Activated CD4-positive, alpha-beta T cell treated with anti-CD3 and anti-CD28 coated beads for 36 hours (primary cell): ENCODE measurements at regions of chr1 and their contacts with region 1.

Region 1: GRCh38 chr1:154607609-154608396 is at the start of gene ADAR:
- DNase-seq: peak; percentile 95
- ATAC-seq: peak; percentile 69
- H3K4me3 Mint-ChIP-seq: peak within 1 kb of the TSS; percentile 95
- H3K27ac Mint-ChIP-seq: peak within 1 kb of the TSS; percentile 99
- H3K4me1 Mint-ChIP-seq: peaks cover 75% of the 10 kb centered on the region
- H3K27me3 Mint-ChIP-seq: no peaks in the 10 kb centered on the region
- total RNA-seq, gene ADAR: 310 to 332 TPM

Region 2: DNA sequence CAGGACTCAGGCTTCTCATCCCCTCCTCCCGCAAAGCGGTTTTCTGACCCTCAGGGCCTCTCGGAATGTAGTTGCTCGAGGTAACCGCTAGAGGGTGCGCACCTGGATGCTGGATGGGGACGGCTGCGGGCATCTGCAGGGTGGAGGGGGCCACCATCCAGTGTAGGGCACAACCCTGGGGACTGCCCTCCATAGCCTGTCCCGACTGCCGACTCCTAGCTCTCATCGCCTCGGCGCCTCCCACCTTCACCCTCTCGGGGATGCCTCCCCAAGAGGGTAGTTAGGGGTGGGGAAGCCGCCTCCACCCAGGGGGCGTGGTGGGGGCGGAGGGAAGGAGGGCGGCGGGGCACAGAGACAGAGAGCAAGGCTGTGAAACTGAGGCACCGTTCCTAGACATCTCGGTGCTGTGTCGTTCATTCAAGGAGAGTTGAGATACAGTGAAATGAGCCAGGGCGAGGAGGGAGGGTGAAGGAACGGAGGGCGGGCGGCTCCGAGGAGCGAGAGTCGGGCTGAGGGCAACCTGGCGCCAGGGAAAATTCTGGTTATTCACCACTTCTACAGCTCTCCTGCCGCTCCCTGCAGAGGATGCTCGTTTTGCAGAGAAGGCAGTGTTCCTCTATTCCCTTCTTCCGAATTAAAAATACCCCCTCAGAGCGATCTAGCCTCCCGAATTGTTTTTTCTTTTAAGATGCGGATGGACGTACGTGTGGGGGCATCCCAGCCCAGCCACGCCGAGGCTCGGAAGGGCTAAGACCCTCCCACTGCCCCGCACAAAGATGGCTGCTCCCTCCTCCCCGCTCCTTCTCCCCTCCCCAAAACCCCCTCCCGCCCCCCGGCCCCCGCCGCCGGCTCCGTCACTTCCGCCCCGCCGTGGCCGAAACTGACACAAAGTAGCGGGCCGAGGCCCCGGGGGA is 282.9 kb before region 1 on chr1 and contains the start of gene ATP8B2:
- CTCF ChIA-PET with region 1: no interaction called
- POLR2A ChIA-PET with region 1: no interaction called
- intact Hi-C with region 1: loop called in 1 of 2 experiments (anchors 1 kb)
- DNase-seq: peak; percentile 92
- ATAC-seq: peak; percentile 70
- H3K4me3 Mint-ChIP-seq: peak within 1 kb of the TSS; percentile 99
- H3K27ac Mint-ChIP-seq: peak within 1 kb of the TSS; percentile 94
- H3K4me1 Mint-ChIP-seq: peaks cover 39% of the 10 kb centered on the region
- H3K27me3 Mint-ChIP-seq: no peaks in the 10 kb centered on the region
- total RNA-seq, gene ATP8B2: 48.2 TPM

Region 3: GRCh38 chr1:154574716-154575115 is 33.1 kb before region 1 on chr1:
- CTCF ChIA-PET with region 1: no interaction called
- POLR2A ChIA-PET with region 1: no interaction called
- intact Hi-C with region 1: no loop called
- DNase-seq: peak; percentile 47
- ATAC-seq: peak; percentile 42
- H3K4me3 Mint-ChIP-seq: no peak overlapping the region
- H3K27ac Mint-ChIP-seq: no peak overlapping the region
- H3K4me1 Mint-ChIP-seq: no peaks in the 10 kb centered on the region
- H3K27me3 Mint-ChIP-seq: no peaks in the 10 kb centered on the region

Region 4: GRCh38 chr1:154627257-154628120 is 19.7 kb after region 1 on chr1:
- CTCF ChIA-PET with region 1: interaction called, 18 read pairs
- POLR2A ChIA-PET with region 1: interaction called, 6 read pairs
- intact Hi-C with region 1: loop called (anchors 1 kb)
- DNase-seq: peak; percentile 96
- ATAC-seq: peak; percentile 74
- H3K4me3 Mint-ChIP-seq: peak overlapping the region; percentile 99
- H3K27ac Mint-ChIP-seq: peak overlapping the region; percentile 100
- H3K4me1 Mint-ChIP-seq: peaks cover 47% of the 10 kb centered on the region
- H3K27me3 Mint-ChIP-seq: peaks cover 1% of the 10 kb centered on the region

Region 5: DNA sequence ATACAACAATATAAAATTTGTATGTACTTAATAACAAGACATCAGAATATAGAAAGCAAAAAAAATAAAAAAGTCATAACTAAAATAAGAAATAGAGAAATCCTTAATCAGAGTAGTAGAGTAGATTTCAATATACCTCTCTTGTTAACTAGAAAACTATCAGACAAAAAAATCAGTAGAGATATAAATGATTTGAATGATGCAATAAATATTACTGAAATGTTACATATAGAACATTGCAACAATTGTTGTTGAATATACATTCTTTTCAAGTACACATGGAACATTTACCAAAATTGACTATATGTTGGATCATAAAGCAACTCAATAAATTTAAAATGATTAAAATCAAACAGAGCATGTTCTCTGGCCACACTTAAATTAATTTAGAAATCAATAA is 32.1 kb after region 1 on chr1:
- CTCF ChIA-PET with region 1: no interaction called
- POLR2A ChIA-PET with region 1: no interaction called
- intact Hi-C with region 1: no loop called
- DNase-seq: no peak
- ATAC-seq: no peak
- H3K4me3 Mint-ChIP-seq: no peak overlapping the region
- H3K27ac Mint-ChIP-seq: no peak overlapping the region
- H3K4me1 Mint-ChIP-seq: no peaks in the 10 kb centered on the region
- H3K27me3 Mint-ChIP-seq: peaks cover 16% of the 10 kb centered on the region

Region 6: DNA sequence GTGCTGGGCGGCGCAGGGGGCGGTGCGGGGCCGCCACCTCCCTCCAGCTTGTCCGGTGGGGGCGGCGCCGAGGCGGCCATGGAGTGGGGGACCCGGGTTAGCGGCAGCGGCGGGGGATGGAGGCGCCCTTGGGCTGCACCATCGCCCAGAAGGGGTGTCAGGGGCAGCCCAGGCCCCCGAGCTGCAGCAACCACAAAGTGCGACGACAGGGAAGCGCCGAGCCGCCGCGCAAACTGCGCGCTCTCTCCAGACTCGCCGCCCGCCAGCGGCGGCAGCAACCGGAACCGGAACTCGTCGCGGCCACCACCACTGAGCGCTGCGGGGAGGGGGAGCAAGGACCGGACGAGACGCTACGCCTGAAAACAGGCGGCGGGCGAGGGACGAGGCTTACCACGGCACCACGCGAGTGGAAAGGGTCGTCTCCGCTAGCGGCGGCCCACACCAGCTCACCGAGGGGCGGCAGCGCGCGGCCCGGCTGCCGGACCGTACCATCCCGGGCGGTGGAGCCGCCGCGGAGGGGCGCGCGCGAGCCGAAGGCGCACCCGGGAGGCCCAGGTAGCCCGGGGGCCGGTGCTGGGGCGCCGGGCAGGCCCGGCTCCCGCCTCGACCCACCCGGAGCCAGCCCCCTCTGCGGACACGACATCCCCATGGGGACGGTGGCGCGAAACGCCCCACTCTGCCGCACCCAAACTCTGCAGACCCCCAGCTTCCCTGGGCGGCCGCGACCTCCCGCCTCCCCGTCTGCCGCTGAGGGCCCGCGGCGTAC is 353.9 kb after region 1 on chr1 and contains the start of gene PYGO2:
- CTCF ChIA-PET with region 1: no interaction called
- POLR2A ChIA-PET with region 1: no interaction called
- intact Hi-C with region 1: loop called in 1 of 2 experiments (anchors 1 kb)
- DNase-seq: peak; percentile 90
- ATAC-seq: peak; percentile 81
- H3K4me3 Mint-ChIP-seq: peak within 1 kb of the TSS; percentile 91
- H3K27ac Mint-ChIP-seq: peak within 1 kb of the TSS; percentile 93
- H3K4me1 Mint-ChIP-seq: peaks cover 43% of the 10 kb centered on the region
- H3K27me3 Mint-ChIP-seq: no peaks in the 10 kb centered on the region
- total RNA-seq, gene PYGO2: 24.5 to 25.6 TPM